ENCODE measurements at regions of chr1 and their contacts with region 1.

Region 1: DNA sequence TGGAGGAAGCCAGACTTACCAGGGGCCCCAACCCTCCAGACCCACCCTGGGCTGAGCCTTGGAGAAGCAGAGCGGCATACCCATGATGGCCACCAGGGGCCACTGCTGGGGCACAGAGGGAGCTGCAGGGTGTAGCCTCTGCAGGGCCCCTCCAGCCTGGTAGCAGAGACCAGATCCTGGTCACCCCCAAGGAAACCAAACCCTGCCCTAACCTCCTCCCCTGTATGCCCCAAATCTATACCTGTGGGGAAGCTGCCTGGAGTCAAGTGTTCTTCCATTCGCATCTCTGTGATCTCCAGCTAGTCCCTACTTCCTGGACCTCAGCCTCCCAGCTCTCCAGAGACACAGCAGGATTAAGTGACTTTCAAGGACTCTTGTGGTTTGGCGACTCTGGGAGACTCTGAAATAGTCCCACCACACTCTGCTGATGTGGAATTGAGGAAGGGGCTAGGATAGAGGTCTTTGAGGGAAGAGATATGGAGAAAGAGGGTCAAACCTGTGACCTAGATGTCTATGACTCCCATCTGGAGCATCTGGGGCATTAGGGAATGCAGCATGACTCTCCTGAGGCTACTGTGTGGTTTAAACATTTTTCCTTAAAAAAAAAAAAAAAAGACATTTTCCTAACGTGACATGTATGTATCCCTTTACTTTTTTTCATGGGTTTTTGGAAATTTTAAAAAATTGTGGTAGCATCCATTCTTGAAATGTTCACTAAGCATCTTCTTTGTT is 119.2 kb upstream of the IPO9 start:
- DNase-seq: peak; percentile 55 to 68 (median 64)
- H3K4me3 ChIP-seq: no peak overlapping the region
- H3K4me3 Mint-ChIP-seq: no peak overlapping the region
- H3K27ac ChIP-seq: no peak overlapping the region
- H3K27ac Mint-ChIP-seq: no peak overlapping the region
- H3K4me1 ChIP-seq: peaks cover 38 to 40% of the 10 kb centered on the region in 2 donors
- H3K4me1 Mint-ChIP-seq: peaks cover 44% of the 10 kb centered on the region
- H3K27me3 ChIP-seq: no peaks in the 10 kb centered on the region
- H3K27me3 Mint-ChIP-seq: peaks cover 0 to 5% (median 2%) of the 10 kb centered on the region in 3 donors
- CTCF ChIP-seq: peak; percentile 97

Region 2: GRCh38 chr1:201108614-201109013 is 601.1 kb before region 1 on chr1:
- intact Hi-C with region 1: no loop called
- DNase-seq: no peak
- H3K4me3 ChIP-seq: no peak overlapping the region
- H3K4me3 Mint-ChIP-seq: no peak overlapping the region
- H3K27ac ChIP-seq: no peak overlapping the region
- H3K27ac Mint-ChIP-seq: peak overlapping the region in 1 of 7 donors; percentile 58
- H3K4me1 ChIP-seq: no peaks in the 10 kb centered on the region
- H3K4me1 Mint-ChIP-seq: no peaks in the 10 kb centered on the region
- H3K27me3 ChIP-seq: peaks cover 0 to 10% of the 10 kb centered on the region in 2 donors
- H3K27me3 Mint-ChIP-seq: peaks cover 12 to 16% (median 13%) of the 10 kb centered on the region in 3 donors
- CTCF ChIP-seq: no peak

Region 3: GRCh38 chr1:201721082-201722049 is 11.6 kb after region 1 on chr1:
- intact Hi-C with region 1: loop called in 1 of 2 experiments (anchors 2 kb)
- DNase-seq: no peak
- H3K4me3 ChIP-seq: no peak overlapping the region
- H3K4me3 Mint-ChIP-seq: no peak overlapping the region
- H3K27ac ChIP-seq: no peak overlapping the region
- H3K27ac Mint-ChIP-seq: no peak overlapping the region
- H3K4me1 ChIP-seq: peaks cover 28 to 31% of the 10 kb centered on the region in 2 donors
- H3K4me1 Mint-ChIP-seq: peaks cover 30% of the 10 kb centered on the region
- H3K27me3 ChIP-seq: no peaks in the 10 kb centered on the region
- H3K27me3 Mint-ChIP-seq: peaks cover 0 to 5% (median 5%) of the 10 kb centered on the region in 3 donors
- CTCF ChIP-seq: no peak

Region 4: DNA sequence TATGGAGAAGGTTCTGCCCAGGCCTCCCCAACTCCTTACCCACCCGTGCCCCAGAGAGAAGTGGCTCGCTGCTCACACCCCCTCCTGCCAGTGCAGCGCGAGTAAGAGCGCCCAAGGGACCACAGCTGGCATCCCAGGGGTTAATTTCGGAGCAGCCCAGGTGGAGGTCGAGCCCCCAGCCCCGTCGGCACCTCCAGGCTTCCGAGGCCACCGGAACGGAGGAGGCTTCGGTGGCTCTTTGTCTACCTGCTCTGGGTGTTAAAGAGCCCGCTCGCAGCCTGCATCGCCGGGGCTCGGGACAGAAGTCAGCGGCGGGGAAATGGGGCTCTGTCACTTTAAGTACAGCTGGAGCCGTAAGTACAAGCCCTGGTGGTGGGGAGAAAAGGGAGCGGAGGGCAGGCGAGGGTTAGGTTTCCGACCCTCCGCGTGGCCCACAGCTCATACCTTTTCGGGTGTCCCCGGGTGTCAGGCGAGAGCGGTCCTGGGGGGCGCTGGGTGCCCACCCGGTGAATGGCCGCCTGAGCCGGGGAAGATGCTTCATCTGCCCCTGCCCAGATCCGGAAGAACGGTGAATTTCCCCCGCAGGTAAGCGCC is 29.9 kb after region 1 on chr1:
- intact Hi-C with region 1: loop called in 1 of 2 experiments (anchors 5 kb)
- DNase-seq: peak; percentile 27 to 40 (median 37)
- H3K4me3 ChIP-seq: peak overlapping the region; percentile 29 to 80 (median 63)
- H3K4me3 Mint-ChIP-seq: peak overlapping the region; percentile 89 to 97
- H3K27ac ChIP-seq: no peak overlapping the region
- H3K27ac Mint-ChIP-seq: peak overlapping the region in 1 of 7 donors; percentile 67
- H3K4me1 ChIP-seq: peaks cover 20 to 30% of the 10 kb centered on the region in 2 donors
- H3K4me1 Mint-ChIP-seq: peaks cover 37% of the 10 kb centered on the region
- H3K27me3 ChIP-seq: peaks cover 0 to 15% of the 10 kb centered on the region in 2 donors
- H3K27me3 Mint-ChIP-seq: peaks cover 16 to 28% (median 23%) of the 10 kb centered on the region in 3 donors
- CTCF ChIP-seq: no peak

Region 5: GRCh38 chr1:201748335-201748734 is 38.6 kb after region 1 on chr1:
- intact Hi-C with region 1: loop called (anchors 5 kb)
- DNase-seq: no peak
- H3K4me3 ChIP-seq: no peak overlapping the region
- H3K4me3 Mint-ChIP-seq: no peak overlapping the region
- H3K27ac ChIP-seq: no peak overlapping the region
- H3K27ac Mint-ChIP-seq: peak overlapping the region in 3 of 7 donors; percentile 86 to 94 (median 87)
- H3K4me1 ChIP-seq: peaks cover 31 to 33% of the 10 kb centered on the region in 2 donors
- H3K4me1 Mint-ChIP-seq: peaks cover 32% of the 10 kb centered on the region
- H3K27me3 ChIP-seq: no peaks in the 10 kb centered on the region
- H3K27me3 Mint-ChIP-seq: peaks cover 3 to 4% (median 3%) of the 10 kb centered on the region in 3 donors
- CTCF ChIP-seq: no peak

Region 6: GRCh38 chr1:201792534-201793305 is 83.0 kb after region 1 on chr1:
- intact Hi-C with region 1: loop called (anchors 1 to 2 kb)
- DNase-seq: peak; percentile 55 to 72 (median 71)
- H3K4me3 ChIP-seq: no peak overlapping the region
- H3K4me3 Mint-ChIP-seq: no peak overlapping the region
- H3K27ac ChIP-seq: no peak overlapping the region
- H3K27ac Mint-ChIP-seq: peak overlapping the region in 3 of 7 donors; percentile 24 to 56 (median 47)
- H3K4me1 ChIP-seq: peaks cover 35 to 36% of the 10 kb centered on the region in 2 donors
- H3K4me1 Mint-ChIP-seq: peaks cover 40% of the 10 kb centered on the region
- H3K27me3 ChIP-seq: no peaks in the 10 kb centered on the region
- H3K27me3 Mint-ChIP-seq: peaks cover 0 to 4% (median 0%) of the 10 kb centered on the region in 3 donors
- CTCF ChIP-seq: peak; percentile 98